PC-3 (cell line): ENCODE measurements at regions of chr10 and their contacts with region 1.

Region 1: GRCh38 chr10:7872041-7872442 is 53.7 kb downstream of the TAF3 start:
- DNase-seq: peak; percentile 23
- ATAC-seq: no peak
- H3K4me3 ChIP-seq: peak overlapping the region; percentile 55
- H3K27ac ChIP-seq: no peak overlapping the region
- H3K4me1 ChIP-seq: peaks cover 7% of the 10 kb centered on the region; the same call in 1 of the 2 replicates
- H3K27me3 ChIP-seq: no peaks in the 10 kb centered on the region
- CTCF ChIP-seq: peak; percentile 62

Region 2: DNA sequence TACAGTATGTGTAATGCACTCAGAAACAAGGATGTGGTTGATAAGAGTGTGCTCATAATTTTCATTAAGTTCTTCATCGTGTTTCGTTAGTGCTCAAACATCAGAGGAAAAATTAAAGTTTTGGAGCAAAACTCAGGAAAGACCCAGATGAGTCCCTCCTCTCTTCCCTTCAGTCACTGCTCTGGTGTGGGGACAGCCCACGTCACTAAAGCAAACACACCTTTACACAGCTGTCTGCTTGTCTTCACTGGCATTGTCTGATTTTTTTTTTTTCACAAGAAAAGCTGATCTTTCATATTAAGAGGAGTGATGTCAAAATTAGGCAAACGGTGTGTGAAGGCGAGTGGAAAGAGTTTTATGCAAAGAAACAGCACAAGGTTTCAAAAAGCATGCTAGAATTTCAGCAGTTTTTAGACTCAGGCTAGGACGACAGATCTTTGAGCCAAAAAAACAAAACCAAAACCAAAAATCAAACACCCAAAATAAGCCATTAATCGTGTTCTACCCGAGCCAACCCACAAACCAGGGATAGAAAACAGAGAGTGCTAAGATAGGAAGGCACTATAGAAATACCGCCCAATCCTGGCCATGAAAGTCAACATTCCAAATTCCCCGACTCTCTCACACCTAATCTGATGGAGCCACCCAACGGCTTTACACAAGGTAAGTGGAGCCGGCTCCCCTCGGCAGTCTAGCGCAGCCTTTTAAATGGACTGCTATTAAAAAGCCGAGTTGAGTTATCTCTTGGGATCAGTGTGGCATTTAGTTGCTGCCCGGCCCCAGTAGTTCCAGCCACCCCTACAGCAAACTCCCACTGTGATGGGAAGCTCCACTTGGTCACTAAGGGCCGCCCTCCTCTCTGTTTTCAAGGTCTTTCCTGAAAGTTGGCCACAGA is 154.6 kb after region 1 on chr10:
- CTCF ChIA-PET with region 1: no interaction called
- POLR2A ChIA-PET with region 1: no interaction called
- intact Hi-C with region 1: loop called (anchors 5 kb)
- DNase-seq: peak; percentile 5
- ATAC-seq: peak; percentile 56
- H3K4me3 ChIP-seq: peak overlapping the region; percentile 63
- H3K27ac ChIP-seq: no peak overlapping the region
- H3K4me1 ChIP-seq: no peaks in the 10 kb centered on the region
- H3K27me3 ChIP-seq: no peaks in the 10 kb centered on the region
- CTCF ChIP-seq: no peak

Region 3: DNA sequence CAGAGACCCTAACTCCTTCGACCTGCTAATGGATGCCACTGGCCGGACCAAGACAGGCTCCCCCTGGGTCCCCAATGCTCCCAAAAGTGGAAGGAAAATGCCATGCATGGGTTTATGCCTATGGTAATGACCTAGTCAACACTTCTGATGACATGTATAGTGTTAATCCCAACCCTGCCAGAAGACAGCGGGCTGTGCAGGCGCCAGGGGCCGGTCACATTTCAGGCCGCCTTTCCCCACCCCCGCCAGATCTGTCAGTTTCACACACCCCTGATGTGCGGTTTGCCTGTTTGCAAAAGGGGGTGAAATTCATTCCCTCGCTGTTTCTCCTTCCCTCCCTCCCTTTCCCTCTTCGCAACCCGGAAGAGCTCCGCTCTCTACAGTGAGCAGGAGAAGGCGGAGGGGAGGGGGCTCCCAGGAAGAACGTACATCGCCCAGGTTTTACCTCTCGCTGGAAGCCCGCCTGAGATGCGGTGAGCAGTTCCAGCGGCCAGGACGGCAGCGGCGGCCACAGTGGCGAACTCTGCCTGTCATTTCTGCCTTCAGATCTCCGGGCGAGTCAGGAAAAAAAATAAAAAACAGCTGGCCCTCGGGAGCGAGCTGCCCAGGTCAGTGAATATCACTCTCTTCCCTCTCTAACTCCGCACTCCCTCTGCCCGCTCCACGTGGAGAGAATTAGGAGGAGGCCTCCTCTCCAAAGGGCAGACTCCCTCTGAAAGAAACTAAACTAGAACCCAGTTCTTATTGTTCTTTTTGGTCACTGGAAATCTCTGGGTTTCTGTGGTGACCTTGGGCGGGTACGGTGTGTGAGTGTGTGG is 173.1 kb after region 1 on chr10:
- CTCF ChIA-PET with region 1: no interaction called
- POLR2A ChIA-PET with region 1: no interaction called
- intact Hi-C with region 1: loop called (anchors 5 kb)
- DNase-seq: no peak
- ATAC-seq: no peak
- H3K4me3 ChIP-seq: no peak overlapping the region
- H3K27ac ChIP-seq: no peak overlapping the region
- H3K4me1 ChIP-seq: no peaks in the 10 kb centered on the region
- H3K27me3 ChIP-seq: peaks cover 17% of the 10 kb centered on the region
- CTCF ChIP-seq: no peak

Region 4: GRCh38 chr10:8159341-8160165 is 287.5 kb after region 1 on chr10:
- CTCF ChIA-PET with region 1: interaction called, 7 read pairs
- POLR2A ChIA-PET with region 1: no interaction called
- intact Hi-C with region 1: loop called (anchors 10 kb)
- DNase-seq: peak; percentile 86
- ATAC-seq: peak; percentile 75
- H3K4me3 ChIP-seq: peak overlapping the region; percentile 47
- H3K27ac ChIP-seq: peak overlapping the region; percentile 98
- H3K4me1 ChIP-seq: peaks cover 24% of the 10 kb centered on the region
- H3K27me3 ChIP-seq: no peaks in the 10 kb centered on the region
- CTCF ChIP-seq: no peak

Region 5: GRCh38 chr10:8473205-8473604 is 601.2 kb after region 1 on chr10:
- CTCF ChIA-PET with region 1: no interaction called
- POLR2A ChIA-PET with region 1: no interaction called
- intact Hi-C with region 1: loop called (anchors 1 kb)
- DNase-seq: peak; percentile 34
- ATAC-seq: no peak
- H3K4me3 ChIP-seq: no peak overlapping the region
- H3K27ac ChIP-seq: no peak overlapping the region
- H3K4me1 ChIP-seq: no peaks in the 10 kb centered on the region
- H3K27me3 ChIP-seq: no peaks in the 10 kb centered on the region
- CTCF ChIP-seq: peak; percentile 50

Region 6: DNA sequence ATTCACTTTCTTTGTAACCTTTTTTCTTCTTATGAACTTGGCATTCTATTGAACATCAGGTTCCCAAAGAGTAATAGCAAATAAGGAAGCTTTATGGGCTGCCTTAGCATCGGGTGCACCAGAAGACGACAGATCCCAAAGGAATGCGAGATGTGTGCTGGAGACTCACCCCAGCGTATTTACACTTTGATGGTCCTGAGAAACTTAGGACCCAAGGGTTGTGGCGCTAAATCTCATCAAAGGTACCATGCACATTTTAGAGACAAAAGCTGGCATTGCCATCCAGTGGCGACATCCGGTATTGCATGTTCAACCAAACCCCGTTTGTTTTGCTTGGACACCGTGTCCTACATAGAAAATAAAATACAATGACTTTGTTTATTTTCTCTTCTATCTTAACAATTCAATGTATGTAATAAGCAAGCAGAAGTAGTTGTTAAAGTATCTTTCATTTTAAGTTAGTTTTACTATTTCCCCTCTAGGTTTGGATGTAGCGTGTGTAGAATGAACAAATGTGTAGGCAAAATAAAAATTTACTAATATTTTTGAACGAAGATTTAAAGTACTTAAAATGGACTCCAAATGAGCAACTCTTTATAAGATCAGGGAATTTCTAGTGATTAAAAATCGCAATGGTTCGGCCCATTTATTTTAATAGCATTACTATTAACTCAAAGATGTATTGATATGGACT is 1337.2 kb after region 1 on chr10:
- CTCF ChIA-PET with region 1: interaction called, 5 read pairs
- POLR2A ChIA-PET with region 1: no interaction called
- intact Hi-C with region 1: loop called (anchors 2 kb)
- DNase-seq: peak; percentile 66
- ATAC-seq: peak; percentile 43; the same call in 1 of the 2 replicates
- H3K4me3 ChIP-seq: no peak overlapping the region
- H3K27ac ChIP-seq: no peak overlapping the region
- H3K4me1 ChIP-seq: no peaks in the 10 kb centered on the region
- H3K27me3 ChIP-seq: peaks cover 16% of the 10 kb centered on the region; the same call in 1 of the 2 replicates
- CTCF ChIP-seq: peak; percentile 69

Region 7: GRCh38 chr10:9302120-9302746 is 1430.2 kb after region 1 on chr10:
- CTCF ChIA-PET with region 1: no interaction called
- POLR2A ChIA-PET with region 1: no interaction called
- intact Hi-C with region 1: loop called (anchors 5 kb)
- DNase-seq: peak; percentile 63
- ATAC-seq: no peak
- H3K4me3 ChIP-seq: no peak overlapping the region
- H3K27ac ChIP-seq: no peak overlapping the region
- H3K4me1 ChIP-seq: no peaks in the 10 kb centered on the region
- H3K27me3 ChIP-seq: peaks cover 11% of the 10 kb centered on the region
- CTCF ChIP-seq: peak; percentile 51